SK-N-SH (cell line): ENCODE measurements at regions of chr2 and their contacts with region 1.

Region 1: DNA sequence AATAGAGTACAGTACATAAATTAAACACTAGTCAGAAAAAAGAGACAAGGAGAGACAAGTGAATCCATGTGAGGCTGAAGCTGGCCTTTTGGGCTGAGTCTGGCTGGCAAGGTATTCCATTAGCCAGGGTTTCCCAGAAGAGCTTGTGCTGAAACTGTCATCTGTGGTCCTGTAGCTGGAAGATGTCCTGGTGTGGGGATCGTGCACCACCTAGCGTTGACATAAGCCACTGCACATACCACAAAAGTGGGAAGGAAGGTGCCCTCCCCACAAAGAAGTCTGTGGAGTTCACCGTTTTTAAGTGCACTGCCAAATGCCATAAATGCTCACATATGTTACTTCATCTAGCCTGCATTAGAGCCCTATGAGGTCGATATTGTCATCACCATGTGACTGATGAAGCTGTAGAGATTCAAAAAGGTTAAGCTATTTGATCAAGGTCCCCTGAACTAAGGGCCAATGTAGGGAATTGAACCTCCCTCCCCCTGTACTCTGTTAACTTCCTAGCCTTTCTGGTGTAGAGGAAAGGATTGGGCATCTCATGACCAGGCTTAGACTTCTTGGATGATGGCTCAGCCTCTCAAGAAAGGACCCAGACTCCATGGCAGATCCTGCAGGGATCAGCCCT is 31.9 kb upstream of the GALNT14 start:
- DNase-seq: peak; percentile 87
- H3K4me3 ChIP-seq: no peak overlapping the region; a peak in 1 of 4 replicates
- H3K27ac ChIP-seq: no peak overlapping the region
- H3K4me1 ChIP-seq: peaks cover 0 to 11% of the 10 kb centered on the region in 2 experiments; a peak in 1 of 4 replicates
- H3K27me3 ChIP-seq: no peaks in the 10 kb centered on the region
- CTCF ChIP-seq: peak; percentile 97
- EP300 ChIP-seq: no peak
- RAD21 ChIP-seq: peak; percentile 100

Region 2: DNA sequence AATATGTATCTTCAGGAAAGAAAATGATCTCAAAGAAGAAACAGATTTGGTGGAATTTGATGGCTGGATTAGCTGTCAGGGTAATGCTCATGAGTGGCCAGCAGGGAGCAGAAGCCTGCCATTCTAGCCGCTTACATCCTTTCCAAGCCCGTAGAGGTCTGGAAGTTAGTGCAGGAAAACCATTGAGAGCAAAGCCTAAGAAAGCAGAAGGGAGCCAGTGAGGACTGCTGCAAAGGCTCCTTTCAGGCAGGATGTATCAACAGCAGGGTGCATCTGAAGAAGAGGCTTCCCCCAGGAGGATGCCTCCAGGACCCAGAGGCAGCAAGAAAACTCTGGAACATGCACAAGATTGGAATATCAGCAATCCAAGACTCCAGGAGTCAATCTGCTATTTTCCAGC is 961.7 kb before region 1 on chr2:
- CTCF ChIA-PET with region 1: interaction called, 34 read pairs
- POLR2A ChIA-PET with region 1: no interaction called
- DNase-seq: peak; percentile 81
- H3K4me3 ChIP-seq: no peak overlapping the region
- H3K27ac ChIP-seq: no peak overlapping the region
- H3K4me1 ChIP-seq: peaks cover 0 to 10% of the 10 kb centered on the region in 2 experiments; a peak in 2 of 4 replicates
- H3K27me3 ChIP-seq: no peaks in the 10 kb centered on the region; the same call in 1 of the 2 replicates
- CTCF ChIP-seq: peak; percentile 99
- EP300 ChIP-seq: no peak
- RAD21 ChIP-seq: peak; percentile 100

Region 3: GRCh38 chr2:30862054-30862651 is 308.0 kb before region 1 on chr2:
- CTCF ChIA-PET with region 1: interaction called, 172 read pairs
- POLR2A ChIA-PET with region 1: no interaction called
- DNase-seq: peak; percentile 83
- H3K4me3 ChIP-seq: peak overlapping the region in 1 of 2 experiments; percentile 43; a peak in 1 of 4 replicates
- H3K27ac ChIP-seq: peak overlapping the region in 1 of 2 experiments; percentile 62; a peak in 2 of 4 replicates
- H3K4me1 ChIP-seq: peaks cover 0 to 30% of the 10 kb centered on the region in 2 experiments; a peak in 2 of 4 replicates
- H3K27me3 ChIP-seq: no peaks in the 10 kb centered on the region
- CTCF ChIP-seq: peak; percentile 65
- EP300 ChIP-seq: no peak
- RAD21 ChIP-seq: peak; percentile 87

Region 4: DNA sequence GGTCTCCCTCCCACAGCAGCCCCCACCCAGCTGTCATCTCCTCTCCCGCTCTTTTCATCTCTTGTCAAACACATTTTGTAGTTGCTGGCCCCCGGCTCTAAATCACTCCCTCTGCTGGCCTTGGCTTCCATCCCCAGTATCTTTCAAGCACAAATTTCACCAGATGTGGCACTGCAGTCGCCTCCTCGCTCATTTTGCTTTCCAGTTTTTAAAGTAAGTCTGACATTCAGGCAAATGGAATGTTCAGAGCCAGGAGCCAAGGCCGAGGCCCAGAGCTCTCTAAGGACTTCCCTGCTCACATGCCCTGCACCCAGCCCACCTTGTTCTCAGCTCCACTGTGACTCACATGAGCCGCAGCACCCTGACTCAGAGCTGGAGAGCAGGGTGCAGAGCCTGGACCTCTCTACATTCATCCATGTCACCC is 190.4 kb before region 1 on chr2:
- CTCF ChIA-PET with region 1: interaction called, 13 read pairs
- POLR2A ChIA-PET with region 1: no interaction called
- DNase-seq: peak; percentile 55
- H3K4me3 ChIP-seq: no peak overlapping the region
- H3K27ac ChIP-seq: peak overlapping the region in 1 of 2 experiments; percentile 80; a peak in 2 of 4 replicates
- H3K4me1 ChIP-seq: peaks cover 0 to 57% of the 10 kb centered on the region in 2 experiments; a peak in 2 of 4 replicates
- H3K27me3 ChIP-seq: no peaks in the 10 kb centered on the region
- CTCF ChIP-seq: peak; percentile 11; the same call in 1 of the 2 replicates
- EP300 ChIP-seq: no peak
- RAD21 ChIP-seq: peak; percentile 48

Region 5: DNA sequence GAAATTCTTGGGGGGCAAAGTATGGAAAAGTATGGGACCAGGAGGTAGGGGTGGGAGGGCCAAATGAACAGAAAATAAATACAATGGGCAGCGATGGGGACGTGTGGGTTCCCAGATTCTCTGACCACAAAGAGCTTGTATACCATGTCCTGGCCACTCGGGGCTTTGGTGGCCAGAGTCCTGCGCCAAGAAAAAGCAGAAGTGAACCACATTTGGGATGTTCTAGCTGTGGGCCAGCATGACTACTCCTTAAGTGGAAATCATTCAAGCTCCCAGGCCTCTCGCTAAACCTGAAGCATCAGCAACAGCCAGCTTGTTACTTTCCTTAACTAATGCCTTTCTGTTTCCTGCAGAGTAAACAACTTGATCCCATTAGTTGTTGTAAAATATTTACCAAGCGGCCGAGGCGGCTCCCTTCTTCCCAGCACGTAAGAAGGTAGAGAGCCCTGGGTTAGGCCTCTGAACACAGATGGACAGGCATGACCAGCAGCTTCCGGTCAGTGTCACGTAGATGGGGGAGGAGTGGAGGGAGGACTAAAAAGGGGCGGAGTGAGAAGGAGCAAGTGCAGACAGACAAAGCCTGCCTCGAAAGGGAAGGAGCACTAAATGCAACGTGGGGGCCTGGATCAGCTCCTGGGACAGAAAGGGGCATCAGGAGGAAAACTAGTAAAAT is 120.1 kb before region 1 on chr2:
- CTCF ChIA-PET with region 1: interaction called, 12 read pairs
- POLR2A ChIA-PET with region 1: no interaction called
- DNase-seq: no peak
- H3K4me3 ChIP-seq: no peak overlapping the region
- H3K27ac ChIP-seq: no peak overlapping the region
- H3K4me1 ChIP-seq: peaks cover 0 to 7% of the 10 kb centered on the region in 2 experiments; a peak in 2 of 4 replicates
- H3K27me3 ChIP-seq: no peaks in the 10 kb centered on the region
- CTCF ChIP-seq: no peak
- EP300 ChIP-seq: no peak
- RAD21 ChIP-seq: no peak

Region 6: DNA sequence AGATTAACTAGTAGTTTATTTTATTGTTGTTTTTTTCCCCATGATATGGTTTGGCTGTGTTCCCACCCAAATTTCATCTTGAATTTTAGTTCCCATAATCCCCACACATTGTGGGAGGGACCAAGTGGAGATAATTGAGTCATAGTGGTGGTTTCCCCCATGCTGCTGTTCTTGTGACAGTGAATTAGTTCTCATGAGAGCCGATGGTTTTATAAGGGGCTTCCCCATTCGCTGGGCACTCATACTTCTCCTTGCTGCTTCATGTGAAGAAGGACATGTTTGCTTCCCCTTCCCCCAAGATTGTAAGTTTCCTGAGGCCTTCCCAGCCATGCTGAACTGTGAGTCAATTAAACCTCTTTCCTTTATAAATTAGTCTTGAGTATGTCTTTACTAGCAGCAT is 68.5 kb before region 1 on chr2:
- CTCF ChIA-PET with region 1: no interaction called
- POLR2A ChIA-PET with region 1: no interaction called
- DNase-seq: no peak
- H3K4me3 ChIP-seq: no peak overlapping the region
- H3K27ac ChIP-seq: no peak overlapping the region
- H3K4me1 ChIP-seq: no peaks in the 10 kb centered on the region
- H3K27me3 ChIP-seq: no peaks in the 10 kb centered on the region
- CTCF ChIP-seq: no peak
- EP300 ChIP-seq: no peak
- RAD21 ChIP-seq: no peak

Region 7: DNA sequence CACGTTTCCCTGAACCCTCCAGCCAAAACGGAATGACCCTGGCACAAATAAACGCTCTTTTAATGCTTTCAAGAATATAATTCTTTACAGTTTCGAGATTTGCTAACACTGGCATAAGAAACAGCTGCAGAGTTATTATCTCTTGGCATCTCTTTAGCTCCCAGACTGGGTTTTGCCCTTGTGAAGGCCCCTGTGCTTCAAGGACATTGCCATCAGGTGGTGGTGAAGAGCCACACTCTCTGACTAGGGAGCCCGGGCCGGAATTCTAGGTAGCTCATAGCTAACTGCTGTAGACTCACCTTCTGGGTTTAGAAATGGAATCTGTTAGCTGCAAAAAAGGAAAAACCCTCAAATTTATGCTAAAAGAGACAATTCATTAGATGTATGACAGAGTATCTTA is 18.7 kb before region 1 on chr2:
- CTCF ChIA-PET with region 1: interaction called, 130 read pairs
- POLR2A ChIA-PET with region 1: no interaction called
- DNase-seq: peak; percentile 40
- H3K4me3 ChIP-seq: no peak overlapping the region
- H3K27ac ChIP-seq: no peak overlapping the region
- H3K4me1 ChIP-seq: no peaks in the 10 kb centered on the region
- H3K27me3 ChIP-seq: 0 out of 2 replicates have a peak, but pooled peaks cover 5% of the 10 kb centered on the region
- CTCF ChIP-seq: 0 out of 2 replicates have a peak, but pooled peaks have one; percentile 19
- EP300 ChIP-seq: no peak
- RAD21 ChIP-seq: peak; percentile 39

Region 8: DNA sequence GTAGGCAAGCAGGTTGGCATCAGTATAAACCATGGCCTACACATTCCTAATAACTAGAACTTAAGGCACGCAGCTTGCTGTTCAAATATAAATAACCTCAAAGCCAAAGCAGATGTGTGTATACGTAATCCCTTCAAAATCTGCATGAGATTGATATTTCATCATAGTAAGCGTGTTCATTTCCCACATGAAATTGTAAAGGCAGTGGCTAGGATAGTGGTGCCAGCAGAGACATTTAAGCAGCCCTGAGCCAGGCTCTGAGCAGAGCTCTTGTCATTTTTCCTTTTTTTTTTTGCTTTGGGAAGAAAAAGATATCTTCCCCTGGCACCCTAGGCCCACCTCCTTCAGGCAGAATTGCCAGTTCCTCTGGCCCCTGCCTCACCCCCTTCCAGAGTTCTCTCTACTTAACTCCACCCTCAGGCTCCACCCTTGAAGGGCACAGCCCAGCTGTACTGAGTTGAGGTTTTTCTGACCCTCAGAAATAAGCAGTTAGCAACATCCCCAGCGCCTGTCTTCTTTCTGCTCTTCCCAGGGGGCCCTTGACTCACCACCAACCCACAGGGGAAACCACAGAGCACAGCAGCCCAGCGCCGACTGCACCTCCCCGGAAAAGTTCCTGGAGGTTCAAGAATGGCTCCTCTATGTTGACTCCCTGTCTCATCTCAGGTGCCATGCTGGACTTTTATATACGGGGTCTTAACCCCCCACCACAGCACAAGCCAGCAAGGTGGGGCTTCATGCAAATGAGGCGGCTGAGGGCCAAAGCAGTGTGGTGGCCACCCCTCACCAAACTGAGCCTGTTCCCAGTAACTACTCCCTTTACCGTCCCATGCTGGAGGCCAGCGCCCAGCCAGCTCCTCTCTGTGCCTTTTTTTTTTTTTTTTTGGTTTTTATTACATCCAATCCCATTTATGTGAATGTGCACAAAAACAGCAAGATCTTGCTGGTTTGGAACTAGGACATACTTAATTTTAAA is 148.5 kb after region 1 on chr2:
- CTCF ChIA-PET with region 1: interaction called, 10 read pairs
- POLR2A ChIA-PET with region 1: no interaction called
- DNase-seq: no peak
- H3K4me3 ChIP-seq: no peak overlapping the region
- H3K27ac ChIP-seq: peak overlapping the region; percentile 4 to 67; a peak in 1 of 4 replicates
- H3K4me1 ChIP-seq: peaks cover 18 to 25% of the 10 kb centered on the region in 2 experiments
- H3K27me3 ChIP-seq: no peaks in the 10 kb centered on the region
- CTCF ChIP-seq: no peak
- EP300 ChIP-seq: peak in 1 of 2 experiments; percentile 32; a peak in 1 of 4 replicates
- RAD21 ChIP-seq: no peak